Testis (tissue), 5 donors: ENCODE measurements at regions of chr18 and their contacts with region 1.

Region 1: DNA sequence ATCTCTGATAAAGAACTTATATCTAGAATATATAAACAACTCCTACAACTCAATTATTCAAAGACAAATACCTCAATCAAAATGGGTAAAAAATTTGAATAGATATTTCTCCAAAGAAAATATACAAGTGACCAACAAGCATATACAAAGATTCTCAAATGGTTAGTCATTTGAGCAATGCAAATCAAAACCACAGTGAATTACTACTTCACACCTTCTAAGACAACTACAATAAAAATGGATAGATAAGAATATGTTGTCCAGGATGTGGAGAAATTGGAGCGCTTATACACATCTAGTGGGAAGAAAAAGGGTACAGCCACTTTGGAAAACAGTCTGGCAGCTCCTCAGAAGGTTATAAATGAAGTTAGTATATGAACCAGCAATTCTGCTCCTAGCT is 332.9 kb downstream of the TGIF1 start:
- DNase-seq: no peak
- H3K4me3 ChIP-seq: no peak overlapping the region
- H3K27ac ChIP-seq: no peak overlapping the region
- H3K4me1 ChIP-seq: no peaks in the 10 kb centered on the region
- H3K27me3 ChIP-seq: no peaks in the 10 kb centered on the region
- CTCF ChIP-seq: no peak
- POLR2A ChIP-seq: no peak

Region 2: DNA sequence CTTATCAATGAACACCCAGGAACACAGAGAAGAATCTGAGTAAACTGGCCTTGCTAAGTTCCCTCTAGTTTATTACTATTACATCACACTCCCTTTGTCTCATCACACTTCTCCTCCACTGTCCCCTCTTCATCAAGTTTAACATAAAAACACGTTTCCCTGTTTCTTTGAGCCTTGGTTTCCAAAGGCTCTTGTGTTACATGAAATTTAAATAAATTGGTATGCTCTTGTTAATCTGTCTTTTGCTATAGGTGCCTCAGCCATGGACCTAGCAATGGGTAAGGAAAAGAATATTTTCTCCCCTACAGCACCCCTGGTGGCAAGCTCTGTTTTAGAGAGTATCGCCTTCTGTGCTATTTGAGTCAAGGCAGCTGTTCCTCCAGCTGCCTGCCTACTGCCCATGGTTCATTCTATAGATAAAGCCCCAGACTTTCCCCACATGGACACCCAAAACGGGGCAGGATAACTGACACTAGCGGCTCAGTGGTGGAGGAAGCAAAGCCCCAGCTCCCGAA is 301.1 kb before region 1 on chr18:
- intact Hi-C with region 1: no loop called
- DNase-seq: no peak
- H3K4me3 ChIP-seq: no peak overlapping the region
- H3K27ac ChIP-seq: no peak overlapping the region
- H3K4me1 ChIP-seq: no peaks in the 10 kb centered on the region
- H3K27me3 ChIP-seq: no peaks in the 10 kb centered on the region
- CTCF ChIP-seq: peak in 1 of 3 experiments; percentile 30
- POLR2A ChIP-seq: no peak

Region 3: GRCh38 chr18:3869848-3870247 is 86.9 kb after region 1 on chr18:
- intact Hi-C with region 1: loop called (anchors 10 kb)
- DNase-seq: no peak
- H3K4me3 ChIP-seq: no peak overlapping the region
- H3K27ac ChIP-seq: no peak overlapping the region
- H3K4me1 ChIP-seq: no peaks in the 10 kb centered on the region
- H3K27me3 ChIP-seq: no peaks in the 10 kb centered on the region
- CTCF ChIP-seq: peak; percentile 28 to 52 (median 52)
- POLR2A ChIP-seq: no peak